Posterior cingulate gyrus (tissue), 11 donors: ENCODE measurements at regions of chr5 and their contacts with region 1.

Region 1: DNA sequence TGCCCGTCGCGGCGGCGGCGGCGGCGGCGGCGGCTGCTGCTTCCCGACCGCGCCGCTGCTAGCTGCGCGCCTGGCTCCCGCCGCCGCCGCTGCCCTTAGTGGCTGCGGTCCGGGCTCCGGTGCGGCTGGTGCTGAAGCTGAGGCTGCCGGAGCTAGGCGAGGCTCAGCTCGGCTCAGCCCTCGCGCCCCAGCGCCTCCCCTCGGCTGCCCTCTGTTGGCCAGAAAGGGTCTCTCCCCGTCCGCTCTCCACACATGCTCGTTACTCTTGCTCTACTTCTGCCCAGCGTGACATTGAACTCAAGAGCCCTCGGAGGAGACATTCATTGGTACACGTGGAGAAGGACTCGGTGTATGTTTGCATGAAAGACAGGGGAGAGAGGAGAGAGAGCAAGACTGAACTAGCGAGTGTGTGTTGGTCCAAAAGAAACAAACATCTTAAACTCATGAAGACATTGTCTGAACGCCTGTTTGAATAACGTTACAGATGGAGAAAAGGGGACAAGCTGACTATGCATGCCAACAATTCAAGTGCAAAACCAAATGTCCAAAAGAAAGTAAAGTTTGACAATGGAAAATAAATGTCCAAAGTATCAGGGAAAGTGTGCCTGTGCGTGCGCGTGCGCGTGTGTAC is at the start of gene HCN1:
- DNase-seq: peak; percentile 73 to 98 (median 83)

Region 2: GRCh38 chr5:45038366-45038987 is 657.8 kb before region 1 on chr5:
- intact Hi-C with region 1: loop called (anchors 2 kb)
- DNase-seq: no peak

Region 3: GRCh38 chr5:45491368-45491767 is 205.0 kb before region 1 on chr5:
- intact Hi-C with region 1: no loop called
- DNase-seq: no peak

Region 4: DNA sequence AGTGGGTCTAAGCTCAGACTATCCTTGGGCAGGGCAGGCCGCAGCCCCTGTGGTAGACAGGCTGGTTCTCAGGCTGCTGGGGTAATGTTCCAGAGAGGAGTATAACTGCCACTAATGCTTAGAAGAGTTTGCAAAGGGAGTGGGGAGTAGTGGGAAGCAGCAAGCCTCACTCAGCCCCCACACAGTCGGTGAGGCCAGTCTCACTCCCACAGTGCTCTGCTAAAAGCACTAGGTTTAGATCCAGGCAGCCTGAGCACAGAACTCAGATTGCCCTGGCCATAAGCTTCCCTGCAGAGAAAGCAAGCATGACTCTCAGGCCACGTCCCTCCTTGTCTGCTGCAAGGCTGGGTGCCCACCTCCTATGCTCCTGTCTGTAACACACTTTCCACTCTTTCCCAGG is 69.2 kb after region 1 on chr5:
- intact Hi-C with region 1: loop called (anchors 5 kb)
- DNase-seq: peak in 5 of 10 donors; percentile 4 to 86 (median 79)